H1 (cell line): ENCODE measurements at regions of chr19 and their contacts with region 1.

Region 1: DNA sequence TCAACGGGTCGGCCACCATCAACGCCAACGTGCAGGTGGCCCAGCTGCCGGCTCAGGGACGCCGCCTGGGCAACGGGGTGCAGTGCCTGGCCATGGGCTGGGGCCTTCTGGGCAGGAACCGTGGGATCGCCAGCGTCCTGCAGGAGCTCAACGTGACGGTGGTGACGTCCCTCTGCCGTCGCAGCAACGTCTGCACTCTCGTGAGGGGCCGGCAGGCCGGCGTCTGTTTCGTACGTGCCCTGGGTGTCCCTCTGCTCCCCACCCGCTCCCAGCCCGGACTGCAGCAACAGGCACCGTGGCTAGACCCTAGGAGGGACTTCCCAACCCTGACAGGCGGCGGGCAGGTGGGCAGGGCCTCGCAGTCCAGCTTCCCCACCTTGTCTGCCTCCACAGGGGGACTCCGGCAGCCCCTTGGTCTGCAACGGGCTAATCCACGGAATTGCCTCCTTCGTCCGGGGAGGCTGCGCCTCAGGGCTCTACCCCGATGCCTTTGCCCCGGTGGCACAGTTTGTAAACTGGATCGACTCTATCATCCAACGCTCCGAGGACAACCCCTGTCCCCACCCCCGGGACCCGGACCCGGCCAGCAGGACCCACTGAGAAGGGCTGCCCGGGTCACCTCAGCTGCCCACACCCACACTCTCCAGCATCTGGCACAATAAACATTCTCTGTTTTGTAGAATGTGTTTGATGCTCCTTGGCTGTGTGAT is 3.6 kb downstream of the ELANE start:
- DNase-seq: no peak
- H3K4me3 ChIP-seq: no peak overlapping the region
- H3K27ac ChIP-seq: no peak overlapping the region
- H3K4me1 ChIP-seq: no peaks in the 10 kb centered on the region; a peak in 2 of 7 replicates
- H3K27me3 ChIP-seq: peaks cover 8 to 18% (median 11%) of the 10 kb centered on the region in 4 experiments
- CTCF ChIP-seq: no peak
- EP300 ChIP-seq: no peak
- POLR2A ChIP-seq: no peak
- RAD21 ChIP-seq: no peak

Region 2: DNA sequence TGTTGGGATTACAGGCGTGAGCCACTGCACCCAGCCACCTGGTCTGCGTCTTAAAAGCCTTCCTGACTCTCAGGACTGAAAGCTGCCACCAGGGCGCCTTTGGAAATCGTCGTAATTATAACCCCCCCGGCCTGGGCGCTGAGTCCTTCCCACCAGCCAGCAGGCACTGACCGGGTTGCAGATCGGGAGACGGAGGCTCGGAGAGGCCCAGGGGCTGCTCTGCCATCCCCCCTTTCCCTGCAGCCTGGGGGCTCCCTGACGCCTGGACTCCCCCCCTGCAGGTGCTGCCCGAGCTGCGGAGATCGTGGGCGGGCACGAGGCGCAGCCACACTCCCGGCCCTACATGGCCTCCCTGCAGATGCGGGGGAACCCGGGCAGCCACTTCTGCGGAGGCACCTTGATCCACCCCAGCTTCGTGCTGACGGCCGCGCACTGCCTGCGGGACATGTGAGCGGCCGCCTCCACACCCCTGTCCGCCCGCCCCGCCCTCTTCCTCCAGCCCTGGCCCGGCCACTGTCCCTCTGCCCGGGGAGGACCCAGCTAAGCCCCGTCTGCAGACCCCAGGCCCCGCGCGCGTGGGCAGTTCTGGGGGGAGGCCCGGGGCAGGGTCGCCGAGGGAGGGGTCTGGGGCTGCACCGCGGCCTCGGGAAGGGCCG is 12.4 kb before region 1 on chr19:
- CTCF ChIA-PET with region 1: interaction called, 18 read pairs
- POLR2A ChIA-PET with region 1: interaction called, 6 read pairs
- DNase-seq: no peak
- H3K4me3 ChIP-seq: peak overlapping the region in 3 of 4 experiments; percentile 23 to 53 (median 30); a peak in 5 of 8 replicates
- H3K27ac ChIP-seq: no peak overlapping the region
- H3K4me1 ChIP-seq: peaks cover 0 to 6% (median 4%) of the 10 kb centered on the region in 4 experiments; a peak in 4 of 7 replicates
- H3K27me3 ChIP-seq: peaks cover 7 to 21% (median 16%) of the 10 kb centered on the region in 4 experiments
- CTCF ChIP-seq: peak in 2 of 3 experiments; percentile 3 to 5; a peak in 1 of 4 replicates
- EP300 ChIP-seq: no peak
- POLR2A ChIP-seq: no peak
- RAD21 ChIP-seq: no peak